ENCODE measurements at regions of chr11 and their contacts with region 1.

Region 1: GRCh38 chr11:74492974-74493790 is at the start of gene LIPT2:
- DNase-seq: peak; percentile 98
- H3K4me3 Mint-ChIP-seq: peak within 1 kb of the TSS; percentile 82
- H3K27ac Mint-ChIP-seq: peak within 1 kb of the TSS; percentile 67
- H3K4me1 Mint-ChIP-seq: peaks cover 11% of the 10 kb centered on the region
- H3K27me3 Mint-ChIP-seq: no peaks in the 10 kb centered on the region
- CTCF ChIP-seq: no peak
- total RNA-seq, gene LIPT2: 3.0 and 7.9 TPM in 2 replicates

Region 2: DNA sequence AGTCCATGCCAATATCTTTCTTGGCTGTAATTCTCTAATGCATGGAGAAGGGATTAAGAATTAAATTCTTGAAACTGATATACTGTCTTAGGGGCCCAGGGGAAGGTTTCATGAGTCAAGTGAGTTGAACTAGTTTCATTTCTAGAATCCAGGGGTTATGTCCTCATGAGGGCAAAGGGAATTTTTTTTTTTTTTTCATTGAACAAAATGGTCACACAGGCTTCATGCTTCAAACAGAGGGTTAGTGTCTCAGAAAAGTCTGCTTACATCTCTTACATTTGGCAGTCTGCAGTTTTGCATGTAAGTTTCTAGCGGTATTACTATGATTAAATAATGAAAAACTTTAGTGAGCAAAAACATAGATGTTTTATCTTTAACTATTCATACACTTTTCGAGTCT is 289.2 kb before region 1 on chr11:
- CTCF ChIA-PET with region 1: no interaction called
- POLR2A ChIA-PET with region 1: no interaction called
- intact Hi-C with region 1: no loop called
- DNase-seq: no peak
- H3K4me3 Mint-ChIP-seq: no peak overlapping the region
- H3K27ac Mint-ChIP-seq: no peak overlapping the region
- H3K4me1 Mint-ChIP-seq: no peaks in the 10 kb centered on the region
- H3K27me3 Mint-ChIP-seq: no peaks in the 10 kb centered on the region
- CTCF ChIP-seq: no peak

Region 3: DNA sequence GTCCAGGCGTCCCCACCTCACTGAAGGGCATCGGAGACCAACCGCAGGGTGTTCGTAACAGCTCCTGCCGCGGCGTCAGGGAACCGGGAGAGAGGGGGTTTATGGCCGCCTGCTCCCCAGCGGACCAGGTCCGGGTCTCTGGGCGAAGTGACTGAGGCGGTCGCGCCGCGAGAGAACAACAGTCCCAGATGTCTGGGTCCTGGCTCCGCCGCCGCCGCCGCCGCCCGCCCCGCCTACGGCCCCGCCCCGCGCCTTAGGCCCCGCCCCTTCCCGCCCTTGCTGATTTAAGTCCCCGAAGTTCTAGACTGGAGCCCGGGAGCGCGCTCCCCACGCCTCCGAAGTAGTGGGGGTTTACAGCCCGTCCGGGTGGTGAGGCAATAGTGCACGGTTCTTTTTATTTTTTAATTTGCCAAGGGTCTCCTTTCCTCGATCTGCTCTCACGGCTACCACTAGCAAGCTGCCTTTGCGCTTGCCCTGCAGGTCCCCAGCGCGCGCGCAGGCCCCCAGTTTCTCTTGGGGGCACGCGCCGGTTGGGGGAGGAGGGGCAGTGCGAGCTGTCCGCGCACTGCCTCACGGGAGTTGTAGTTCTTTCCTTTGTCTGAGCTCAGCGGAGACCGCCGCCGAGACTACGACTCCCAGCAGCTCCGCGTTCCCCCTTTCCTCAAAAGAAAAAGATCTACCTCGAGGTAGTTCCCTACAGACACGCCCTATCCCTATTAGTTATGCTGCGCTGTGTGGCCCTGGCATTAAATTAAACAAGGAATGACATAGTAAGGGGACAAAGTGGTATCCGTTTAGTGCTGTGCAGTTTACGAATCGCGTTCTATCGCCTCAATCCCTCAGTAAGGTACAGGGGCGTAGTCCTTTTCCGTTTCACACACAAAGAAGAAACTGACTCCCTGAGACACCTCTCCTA is 94.7 kb before region 1 on chr11 and contains the start of gene PGM2L1:
- CTCF ChIA-PET with region 1: no interaction called
- POLR2A ChIA-PET with region 1: interaction called, 21 read pairs
- intact Hi-C with region 1: no loop called
- DNase-seq: peak; percentile 94
- H3K4me3 Mint-ChIP-seq: peak within 1 kb of the TSS; percentile 99
- H3K27ac Mint-ChIP-seq: peak within 1 kb of the TSS; percentile 90
- H3K4me1 Mint-ChIP-seq: peaks cover 6% of the 10 kb centered on the region
- H3K27me3 Mint-ChIP-seq: no peaks in the 10 kb centered on the region
- CTCF ChIP-seq: no peak
- total RNA-seq, gene PGM2L1: 0.59 and 0.75 TPM in 2 replicates

Region 4: DNA sequence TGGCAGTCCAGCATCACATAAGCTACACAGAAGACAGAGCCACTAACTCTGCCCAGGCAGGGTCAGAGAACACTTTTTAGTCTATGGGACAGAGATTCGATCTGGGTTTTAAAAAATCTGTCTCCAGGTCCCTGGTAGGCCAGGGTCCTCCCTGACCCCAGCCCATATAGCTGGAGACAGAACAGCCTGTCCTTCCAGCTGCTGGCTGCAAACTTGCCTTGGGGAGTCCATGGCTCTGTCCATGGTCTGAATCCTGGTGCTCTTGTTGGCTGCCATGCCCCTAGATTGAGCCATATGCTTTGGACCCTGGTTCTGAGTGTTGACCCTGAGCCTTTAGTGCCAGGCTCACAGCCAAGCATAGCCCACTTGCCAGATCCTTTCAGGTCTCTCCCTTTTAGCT is 13.6 kb after region 1 on chr11:
- CTCF ChIA-PET with region 1: interaction called, 4 read pairs
- POLR2A ChIA-PET with region 1: interaction called, 58 read pairs
- intact Hi-C with region 1: no loop called
- DNase-seq: no peak
- H3K4me3 Mint-ChIP-seq: no peak overlapping the region
- H3K27ac Mint-ChIP-seq: no peak overlapping the region
- H3K4me1 Mint-ChIP-seq: peaks cover 9% of the 10 kb centered on the region
- H3K27me3 Mint-ChIP-seq: no peaks in the 10 kb centered on the region
- CTCF ChIP-seq: no peak

Region 5: DNA sequence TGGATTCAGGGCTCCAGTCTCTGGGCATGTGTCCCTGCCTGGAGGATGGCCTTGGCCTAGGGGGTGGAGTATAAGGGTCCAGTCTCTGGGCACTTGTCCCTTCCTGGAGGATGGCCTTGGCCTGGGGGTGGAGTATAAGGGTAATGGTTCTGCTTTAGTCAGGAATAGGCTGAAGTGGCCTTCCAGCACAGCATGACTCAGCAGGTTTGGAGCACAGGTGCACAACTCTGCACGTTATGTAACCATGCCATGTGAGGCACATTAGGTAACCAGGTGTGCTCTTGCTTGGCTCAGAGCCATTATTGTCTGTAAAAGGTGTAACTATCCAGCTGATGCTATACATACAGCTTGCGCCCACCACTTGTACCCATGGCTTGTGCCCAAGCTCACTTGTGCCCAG is 50.8 kb after region 1 on chr11:
- CTCF ChIA-PET with region 1: no interaction called
- POLR2A ChIA-PET with region 1: interaction called, 21 read pairs
- intact Hi-C with region 1: no loop called
- DNase-seq: peak; percentile 70
- H3K4me3 Mint-ChIP-seq: no peak overlapping the region
- H3K27ac Mint-ChIP-seq: no peak overlapping the region
- H3K4me1 Mint-ChIP-seq: peaks cover 6% of the 10 kb centered on the region
- H3K27me3 Mint-ChIP-seq: no peaks in the 10 kb centered on the region
- CTCF ChIP-seq: no peak

Region 6: GRCh38 chr11:74592441-74593362 is 99.5 kb after region 1 on chr11 and contains the start of gene POLD3:
- CTCF ChIA-PET with region 1: interaction called, 3 read pairs
- POLR2A ChIA-PET with region 1: interaction called, 17 read pairs
- intact Hi-C with region 1: no loop called
- DNase-seq: peak; percentile 93
- H3K4me3 Mint-ChIP-seq: peak within 1 kb of the TSS; percentile 85
- H3K27ac Mint-ChIP-seq: peak within 1 kb of the TSS; percentile 94
- H3K4me1 Mint-ChIP-seq: peaks cover 20% of the 10 kb centered on the region
- H3K27me3 Mint-ChIP-seq: no peaks in the 10 kb centered on the region
- CTCF ChIP-seq: no peak
- total RNA-seq, gene POLD3: 19.5 and 27.1 TPM in 2 replicates